CD8-positive, alpha-beta T cell (primary cell): ENCODE measurements at regions of chr20 and their contacts with region 1.

Region 1: DNA sequence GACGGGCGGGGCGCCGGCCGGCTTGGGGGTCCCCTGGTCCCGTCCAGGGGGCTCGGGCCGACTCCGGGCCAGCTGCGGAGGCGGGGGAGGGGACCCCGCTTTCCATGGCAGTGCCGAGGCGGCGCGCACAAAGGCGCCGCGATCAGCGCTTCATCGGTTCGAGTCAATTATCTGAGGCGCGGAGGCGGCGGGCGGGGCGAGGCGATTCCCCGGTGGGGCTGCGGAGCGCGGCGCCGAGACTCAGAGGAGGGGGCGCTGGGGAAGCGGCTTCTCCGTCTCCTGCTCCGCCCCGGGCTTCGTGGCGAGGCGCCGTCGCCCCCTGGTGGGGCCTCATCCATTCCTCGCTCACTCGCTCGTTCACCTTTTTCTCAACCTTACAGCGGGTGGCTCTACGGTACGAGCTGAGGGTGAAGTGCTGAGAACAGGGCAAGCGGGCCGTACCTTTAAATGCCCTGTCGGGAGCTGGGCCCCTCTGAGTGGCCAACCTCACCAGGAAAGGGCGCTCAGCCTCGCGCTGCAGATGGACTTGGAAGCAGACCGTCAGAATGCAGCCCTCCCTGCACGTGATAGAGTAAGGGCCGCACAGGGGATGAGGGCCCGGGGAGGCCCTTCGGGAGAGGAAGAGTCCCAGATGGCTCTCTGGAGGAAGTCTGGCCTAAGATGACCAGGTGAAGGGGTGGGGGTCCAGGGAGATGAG is 39.9 kb downstream of the SLC52A3 start:
- DNase-seq: peak in 7 of 9 experiments; percentile 14 to 62 (median 43)
- ATAC-seq: peak; percentile 75
- H3K4me3 ChIP-seq: peak overlapping the region in 1 of 2 experiments; percentile 27
- H3K4me3 Mint-ChIP-seq: peak overlapping the region; percentile 39
- H3K27ac ChIP-seq: no peak overlapping the region
- H3K27ac Mint-ChIP-seq: no peak overlapping the region
- H3K4me1 ChIP-seq: peaks cover 6% of the 10 kb centered on the region
- H3K4me1 Mint-ChIP-seq: peaks cover 9% of the 10 kb centered on the region
- H3K27me3 ChIP-seq: peaks cover 4% of the 10 kb centered on the region in 2 experiments
- H3K27me3 Mint-ChIP-seq: peaks cover 61% of the 10 kb centered on the region
- CTCF ChIP-seq: peak; percentile 40

Region 2: DNA sequence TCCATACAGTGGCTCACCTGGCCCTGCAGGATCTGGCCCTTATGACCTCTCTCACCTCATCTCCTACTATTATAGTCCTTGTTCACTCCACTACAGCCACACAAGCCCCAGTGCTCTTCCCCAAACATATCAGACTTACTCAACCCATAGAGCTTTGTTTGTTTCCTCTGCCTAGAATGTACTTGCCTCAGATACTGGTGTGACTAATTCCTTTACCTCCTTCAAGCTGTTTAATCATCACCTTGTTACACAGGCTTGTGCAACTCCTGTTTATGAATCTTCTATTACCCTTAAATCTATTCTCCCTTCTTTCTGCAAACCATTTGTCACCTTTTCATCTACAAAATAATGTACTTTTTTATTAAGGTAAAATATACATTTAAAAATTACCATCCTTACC is 637.7 kb before region 1 on chr20:
- CTCF ChIA-PET with region 1: no interaction called
- POLR2A ChIA-PET with region 1: no interaction called
- intact Hi-C with region 1: no loop called
- DNase-seq: no peak
- ATAC-seq: no peak
- H3K4me3 ChIP-seq: no peak overlapping the region
- H3K4me3 Mint-ChIP-seq: no peak overlapping the region
- H3K27ac ChIP-seq: no peak overlapping the region
- H3K27ac Mint-ChIP-seq: no peak overlapping the region
- H3K4me1 ChIP-seq: no peaks in the 10 kb centered on the region
- H3K4me1 Mint-ChIP-seq: no peaks in the 10 kb centered on the region
- H3K27me3 ChIP-seq: peaks cover 5 to 8% of the 10 kb centered on the region in 2 experiments
- H3K27me3 Mint-ChIP-seq: peaks cover 57% of the 10 kb centered on the region
- CTCF ChIP-seq: no peak

Region 3: GRCh38 chr20:658731-659291 is 69.6 kb before region 1 on chr20:
- CTCF ChIA-PET with region 1: no interaction called
- POLR2A ChIA-PET with region 1: no interaction called
- intact Hi-C with region 1: loop called in 1 of 2 experiments (anchors 5 kb)
- DNase-seq: no peak
- ATAC-seq: no peak
- H3K4me3 ChIP-seq: no peak overlapping the region
- H3K4me3 Mint-ChIP-seq: no peak overlapping the region
- H3K27ac ChIP-seq: no peak overlapping the region
- H3K27ac Mint-ChIP-seq: no peak overlapping the region
- H3K4me1 ChIP-seq: peaks cover 2% of the 10 kb centered on the region
- H3K4me1 Mint-ChIP-seq: peaks cover 7% of the 10 kb centered on the region
- H3K27me3 ChIP-seq: peaks cover 3 to 4% of the 10 kb centered on the region in 2 experiments
- H3K27me3 Mint-ChIP-seq: peaks cover 47% of the 10 kb centered on the region
- CTCF ChIP-seq: no peak

Region 4: DNA sequence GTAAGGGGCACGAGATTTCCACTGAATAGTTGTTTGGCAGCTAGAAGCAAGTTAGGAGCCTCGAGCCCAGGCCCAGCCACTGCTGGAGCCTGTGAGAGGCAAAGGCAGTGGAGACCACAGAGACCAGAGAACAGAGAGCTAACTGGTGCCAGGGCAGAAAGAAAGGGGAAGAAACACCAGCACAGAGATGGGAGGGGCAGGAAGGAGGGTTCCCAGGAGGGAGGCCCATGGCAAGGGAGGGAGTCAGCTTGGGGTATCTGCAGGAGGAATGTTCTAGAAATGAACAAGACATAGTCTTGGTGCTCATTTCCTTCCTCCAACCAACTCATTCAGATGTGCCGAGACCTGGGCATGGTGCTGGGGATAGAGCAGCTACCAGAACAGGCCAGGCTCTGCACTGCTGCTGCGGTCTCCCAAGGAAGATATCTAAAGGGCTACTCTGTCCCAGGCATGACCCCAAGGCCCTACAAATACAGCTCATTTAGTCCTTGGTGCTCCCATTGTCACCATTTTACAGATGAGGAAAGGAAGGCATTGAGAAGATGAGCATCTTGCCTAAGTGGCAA is 177.1 kb after region 1 on chr20:
- CTCF ChIA-PET with region 1: no interaction called
- POLR2A ChIA-PET with region 1: no interaction called
- intact Hi-C with region 1: loop called in 1 of 2 experiments (anchors 5 kb)
- DNase-seq: no peak
- ATAC-seq: no peak
- H3K4me3 ChIP-seq: no peak overlapping the region
- H3K4me3 Mint-ChIP-seq: no peak overlapping the region
- H3K27ac ChIP-seq: no peak overlapping the region
- H3K27ac Mint-ChIP-seq: no peak overlapping the region
- H3K4me1 ChIP-seq: no peaks in the 10 kb centered on the region
- H3K4me1 Mint-ChIP-seq: no peaks in the 10 kb centered on the region
- H3K27me3 ChIP-seq: no peaks in the 10 kb centered on the region
- H3K27me3 Mint-ChIP-seq: no peaks in the 10 kb centered on the region
- CTCF ChIP-seq: no peak